A673 (cell line): ENCODE measurements at regions of chr11 and their contacts with region 1.

Region 1: DNA sequence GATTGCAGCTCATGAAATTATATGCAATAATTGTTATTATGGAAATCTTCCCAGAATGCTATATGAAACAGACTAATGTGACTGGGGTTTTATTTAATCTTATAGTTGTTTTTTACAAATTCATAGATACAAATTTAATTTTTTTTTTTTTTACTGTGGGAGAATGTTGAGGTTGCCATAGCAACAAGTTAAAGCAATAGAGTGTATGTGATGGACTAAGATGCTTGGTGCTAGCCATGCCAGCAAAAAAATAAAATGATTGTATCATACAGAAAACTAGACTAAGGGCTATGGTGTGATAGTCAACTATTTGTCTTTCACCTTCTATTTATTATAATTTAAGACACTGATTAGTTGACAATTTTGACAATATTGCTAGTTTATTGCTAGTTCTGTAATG is 163.2 kb upstream of the BLID start:
- DNase-seq: no peak
- H3K4me3 ChIP-seq: no peak overlapping the region
- H3K27ac ChIP-seq: no peak overlapping the region
- H3K4me1 ChIP-seq: no peaks in the 10 kb centered on the region
- H3K27me3 ChIP-seq: no peaks in the 10 kb centered on the region
- CTCF ChIP-seq: no peak

Region 2: DNA sequence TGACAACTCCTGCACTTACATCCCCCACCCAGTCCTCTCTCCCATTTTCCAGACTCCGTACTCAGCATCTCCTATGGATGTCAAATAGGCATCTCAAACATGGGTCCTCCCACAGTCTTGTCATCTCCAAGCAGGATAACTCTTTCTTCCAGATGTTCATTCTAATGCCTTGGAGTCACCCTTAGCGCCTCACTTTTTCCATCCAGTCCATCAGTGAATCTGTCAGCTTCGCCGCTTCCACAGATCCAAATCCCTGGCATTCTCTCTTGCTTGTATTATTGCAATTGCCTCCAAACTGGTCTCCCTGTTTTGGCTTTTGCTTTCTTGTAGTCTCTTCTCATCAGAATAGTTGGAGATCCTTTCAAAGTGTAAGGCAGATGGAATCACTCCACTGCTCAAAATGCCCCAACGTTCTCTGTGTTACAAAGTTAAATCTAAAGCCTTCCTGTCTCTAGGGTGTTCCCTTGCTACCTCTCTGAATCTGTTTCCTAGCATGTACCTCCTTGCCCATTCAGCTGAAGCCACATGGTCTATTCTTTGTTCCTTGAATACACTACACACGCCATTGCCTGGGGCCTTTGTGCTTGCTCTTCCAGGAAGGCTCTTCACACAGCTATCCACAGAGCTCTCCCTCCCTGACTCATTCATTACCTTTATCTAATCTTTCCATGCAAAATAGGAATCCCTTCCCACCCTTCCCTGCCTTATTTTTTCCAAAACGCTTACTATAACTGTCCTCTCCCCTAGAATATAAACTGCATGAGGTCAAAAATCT is 441.1 kb after region 1 on chr11:
- CTCF ChIA-PET with region 1: no interaction called
- POLR2A ChIA-PET with region 1: interaction called, 20 read pairs
- intact Hi-C with region 1: no loop called
- DNase-seq: no peak
- H3K4me3 ChIP-seq: no peak overlapping the region
- H3K27ac ChIP-seq: no peak overlapping the region
- H3K4me1 ChIP-seq: peaks cover 17% of the 10 kb centered on the region
- H3K27me3 ChIP-seq: no peaks in the 10 kb centered on the region
- CTCF ChIP-seq: no peak